Sigmoid colon (tissue), 7 donors: ENCODE measurements at regions of chr4 and their contacts with region 1.

Region 1: GRCh38 chr4:53365486-53366300 is at the start of gene SCFD2:
- DNase-seq: peak; percentile 98
- H3K4me3 ChIP-seq: peak within 1 kb of the TSS; percentile 59 to 94 (median 84)
- H3K27ac ChIP-seq: peak within 1 kb of the TSS; percentile 58 to 74 (median 62)
- H3K4me1 ChIP-seq: peaks cover 0 to 37% (median 22%) of the 10 kb centered on the region in 4 donors
- H3K27me3 ChIP-seq: peaks cover 0 to 13% (median 3%) of the 10 kb centered on the region in 3 donors
- CTCF ChIP-seq: no peak
- EP300 ChIP-seq: no peak
- POLR2A ChIP-seq: no peak
- total RNA-seq, gene SCFD2: 10.7 to 16.6 (median 12.2) TPM

Region 2: GRCh38 chr4:53377319-53378170 is 11.9 kb after region 1 on chr4 and contains the start of gene FIP1L1:
- intact Hi-C with region 1: loop called (anchors 1 kb)
- DNase-seq: peak; percentile 97
- H3K4me3 ChIP-seq: peak within 1 kb of the TSS; percentile 81 to 94 (median 88)
- H3K27ac ChIP-seq: peak within 1 kb of the TSS; percentile 84 to 90 (median 88)
- H3K4me1 ChIP-seq: peaks cover 0 to 26% (median 16%) of the 10 kb centered on the region in 4 donors
- H3K27me3 ChIP-seq: no peaks in the 10 kb centered on the region
- CTCF ChIP-seq: no peak
- EP300 ChIP-seq: no peak
- POLR2A ChIP-seq: peak; percentile 68 to 79
- total RNA-seq, gene FIP1L1: 33.7 to 47.7 (median 43.7) TPM